Naive thymus-derived CD4-positive, alpha-beta T cell (primary cell): ENCODE measurements at regions of chr2 and their contacts with region 1.

Region 1: DNA sequence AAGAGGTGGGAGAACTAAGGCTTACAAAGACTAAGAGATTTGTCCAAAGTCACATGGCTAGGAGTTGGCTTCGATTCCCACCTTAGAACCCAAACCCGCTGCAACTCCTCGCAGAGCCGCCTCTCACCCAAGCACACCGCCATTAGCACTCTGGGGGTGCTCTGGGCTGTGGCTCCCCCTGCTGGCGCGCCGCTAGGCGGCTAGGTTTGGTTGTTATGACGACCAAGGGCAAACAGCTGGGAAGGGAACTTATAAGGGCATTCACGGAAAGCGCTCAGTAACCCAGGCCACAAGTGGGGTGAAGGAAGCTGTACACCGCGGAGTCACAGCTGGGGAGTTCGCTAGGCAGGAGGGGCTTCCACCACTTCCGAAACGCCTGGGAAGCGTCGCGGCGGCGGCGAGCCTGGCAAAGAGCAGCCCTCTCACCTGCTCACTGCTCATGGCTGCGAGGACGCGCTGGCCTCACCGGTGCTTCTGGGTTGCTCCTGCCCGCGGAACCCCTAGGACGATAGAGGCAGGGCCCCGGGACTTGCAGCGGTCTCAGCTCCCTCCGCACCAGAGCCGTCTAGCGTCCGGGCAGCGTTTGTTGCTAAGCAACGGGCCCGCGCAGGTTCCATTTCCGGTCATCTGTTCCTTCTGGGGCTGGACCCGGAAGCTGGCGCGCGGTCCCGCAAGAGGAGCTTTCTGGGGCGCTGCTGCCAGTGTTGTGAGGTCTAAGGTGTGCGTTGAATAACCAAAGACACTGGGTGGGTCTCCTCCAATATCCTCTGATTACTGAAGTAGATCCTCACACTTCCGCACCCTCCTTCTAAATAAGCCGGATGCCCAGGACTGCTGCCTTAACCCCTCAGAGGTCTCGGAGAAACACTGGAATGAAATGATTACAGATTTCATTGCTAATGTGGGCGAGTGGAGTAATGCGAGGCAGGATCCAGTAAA is at the start of gene DNAH7:
- DNase-seq: peak; percentile 84 to 94 (median 92)
- ATAC-seq: peak; percentile 96
- H3K4me3 ChIP-seq: peak within 1 kb of the TSS; percentile 69
- H3K4me3 Mint-ChIP-seq: peak within 1 kb of the TSS; percentile 77 to 92 (median 88)
- H3K27ac ChIP-seq: peak within 1 kb of the TSS; percentile 45
- H3K27ac Mint-ChIP-seq: peak within 1 kb of the TSS; percentile 75 to 94 (median 86)
- H3K4me1 ChIP-seq: peaks cover 6% of the 10 kb centered on the region in 2 donors
- H3K4me1 Mint-ChIP-seq: peaks cover 6 to 16% (median 12%) of the 10 kb centered on the region in 7 donors
- H3K27me3 ChIP-seq: peaks cover 0 to 3% of the 10 kb centered on the region in 2 donors
- H3K27me3 Mint-ChIP-seq: peaks cover 0 to 33% (median 3%) of the 10 kb centered on the region in 5 donors
- total RNA-seq, gene DNAH7: not detected

Region 2: GRCh38 chr2:194166818-194167217 is 1901.7 kb before region 1 on chr2:
- CTCF ChIA-PET with region 1: no interaction called
- POLR2A ChIA-PET with region 1: no interaction called
- intact Hi-C with region 1: loop called (anchors 1 to 2 kb)
- DNase-seq: peak in 2 of 9 donors; percentile 6 to 16
- ATAC-seq: no peak
- H3K4me3 ChIP-seq: no peak overlapping the region
- H3K4me3 Mint-ChIP-seq: no peak overlapping the region
- H3K27ac ChIP-seq: no peak overlapping the region
- H3K27ac Mint-ChIP-seq: no peak overlapping the region
- H3K4me1 ChIP-seq: no peaks in the 10 kb centered on the region
- H3K4me1 Mint-ChIP-seq: no peaks in the 10 kb centered on the region
- H3K27me3 ChIP-seq: no peaks in the 10 kb centered on the region
- H3K27me3 Mint-ChIP-seq: peaks cover 0 to 5% (median 0%) of the 10 kb centered on the region in 5 donors

Region 3: DNA sequence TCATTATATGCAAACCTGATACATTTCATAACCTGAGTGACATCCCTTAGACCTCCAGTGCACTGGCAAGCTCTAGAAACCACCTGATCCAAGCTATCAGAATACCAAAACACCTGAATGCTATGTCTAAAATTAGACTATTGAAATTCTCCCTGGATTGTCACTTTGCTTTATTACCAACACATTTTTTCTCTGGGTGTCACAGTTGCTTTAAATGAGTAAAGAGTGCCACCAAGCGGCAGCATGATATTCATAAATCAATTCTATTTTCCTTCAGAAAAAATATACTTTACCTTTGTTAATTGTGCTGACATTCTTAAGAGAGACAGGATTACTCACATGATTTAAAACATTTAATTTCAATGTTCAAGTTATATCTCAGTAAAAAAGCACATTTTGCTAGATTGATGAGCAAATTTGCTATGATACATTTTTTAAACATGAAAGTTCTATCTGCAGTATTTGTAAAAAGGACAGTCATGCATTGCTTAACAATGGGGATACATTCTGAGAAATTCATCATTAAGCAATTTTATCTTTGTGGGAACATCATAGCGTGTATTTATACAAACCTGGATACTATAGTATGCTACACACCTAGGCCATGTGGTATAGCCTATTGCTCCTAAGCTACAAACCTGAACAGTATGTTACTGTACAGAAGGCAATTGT is 750.0 kb before region 1 on chr2:
- CTCF ChIA-PET with region 1: no interaction called
- POLR2A ChIA-PET with region 1: no interaction called
- intact Hi-C with region 1: loop called (anchors 1 to 2 kb)
- DNase-seq: peak in 7 of 9 donors; percentile 11 to 57 (median 53)
- ATAC-seq: peak; percentile 57
- H3K4me3 ChIP-seq: no peak overlapping the region
- H3K4me3 Mint-ChIP-seq: no peak overlapping the region
- H3K27ac ChIP-seq: no peak overlapping the region
- H3K27ac Mint-ChIP-seq: no peak overlapping the region
- H3K4me1 ChIP-seq: no peaks in the 10 kb centered on the region
- H3K4me1 Mint-ChIP-seq: peaks cover 0 to 35% (median 18%) of the 10 kb centered on the region in 7 donors
- H3K27me3 ChIP-seq: no peaks in the 10 kb centered on the region
- H3K27me3 Mint-ChIP-seq: no peaks in the 10 kb centered on the region

Region 4: DNA sequence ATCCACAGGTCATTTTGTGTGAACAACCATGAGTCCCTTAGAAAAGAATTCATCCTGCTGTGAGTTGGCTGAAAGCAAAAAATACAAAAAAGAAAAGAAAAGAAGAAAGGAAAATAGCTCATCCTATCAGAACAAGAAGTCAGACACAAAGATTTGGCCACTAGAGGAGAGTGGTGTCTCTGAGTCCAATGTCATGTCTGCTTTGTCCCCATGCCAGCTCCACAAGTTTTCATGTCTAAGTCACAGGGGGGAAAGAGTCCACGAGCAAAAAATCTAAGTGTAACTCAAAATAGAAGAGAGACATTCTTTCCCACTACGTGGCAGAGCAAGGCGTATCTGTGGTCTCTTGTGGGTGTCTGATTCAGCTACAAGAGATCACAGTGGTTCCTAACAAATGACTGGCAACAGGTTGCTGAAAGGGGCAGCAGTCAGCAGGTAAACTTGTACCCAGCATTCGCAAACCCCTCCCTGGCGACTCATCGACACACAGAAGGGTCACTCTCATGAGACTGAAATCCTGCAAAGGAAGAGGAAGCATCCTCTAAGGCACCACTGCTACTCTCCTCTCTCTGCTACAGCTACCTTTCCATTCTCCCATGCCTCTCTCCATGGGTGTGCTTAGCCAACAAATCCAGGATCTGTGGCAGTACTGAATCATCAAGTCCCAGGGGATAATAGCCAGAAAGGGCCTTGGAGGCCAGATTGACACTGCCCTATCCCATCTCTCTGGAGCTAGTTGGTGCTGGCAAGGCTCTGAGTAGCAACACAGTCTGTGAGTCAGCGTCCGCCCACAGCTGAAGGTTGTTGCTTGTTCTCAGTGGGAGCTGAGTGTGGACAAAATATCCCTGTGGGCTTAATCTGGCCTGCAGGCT is 534.5 kb before region 1 on chr2:
- CTCF ChIA-PET with region 1: no interaction called
- POLR2A ChIA-PET with region 1: no interaction called
- intact Hi-C with region 1: loop called in 1 of 2 experiments (anchors 2 kb)
- DNase-seq: peak in 8 of 9 donors; percentile 28 to 63 (median 42)
- ATAC-seq: peak; percentile 48
- H3K4me3 ChIP-seq: peak overlapping the region; percentile 51
- H3K4me3 Mint-ChIP-seq: peak overlapping the region; percentile 77 to 95 (median 90)
- H3K27ac ChIP-seq: peak overlapping the region; percentile 77
- H3K27ac Mint-ChIP-seq: peak overlapping the region; percentile 92 to 100 (median 98)
- H3K4me1 ChIP-seq: peaks cover 70 to 73% of the 10 kb centered on the region in 2 donors
- H3K4me1 Mint-ChIP-seq: peaks cover 69 to 90% (median 86%) of the 10 kb centered on the region in 7 donors
- H3K27me3 ChIP-seq: no peaks in the 10 kb centered on the region
- H3K27me3 Mint-ChIP-seq: no peaks in the 10 kb centered on the region

Region 5: GRCh38 chr2:195664528-195664927 is 404.0 kb before region 1 on chr2:
- CTCF ChIA-PET with region 1: interaction called, 7 read pairs
- POLR2A ChIA-PET with region 1: interaction called, 3 read pairs
- intact Hi-C with region 1: loop called in 1 of 2 experiments (anchors 1 kb)
- DNase-seq: peak in 2 of 9 donors; percentile 13 to 20
- ATAC-seq: no peak
- H3K4me3 ChIP-seq: no peak overlapping the region
- H3K4me3 Mint-ChIP-seq: peak overlapping the region in 4 of 10 donors; percentile 45 to 54 (median 49)
- H3K27ac ChIP-seq: peak overlapping the region; percentile 42
- H3K27ac Mint-ChIP-seq: peak overlapping the region in 8 of 9 donors; percentile 71 to 93 (median 85)
- H3K4me1 ChIP-seq: peaks cover 20 to 46% of the 10 kb centered on the region in 2 donors
- H3K4me1 Mint-ChIP-seq: peaks cover 30 to 95% (median 78%) of the 10 kb centered on the region in 7 donors
- H3K27me3 ChIP-seq: no peaks in the 10 kb centered on the region
- H3K27me3 Mint-ChIP-seq: no peaks in the 10 kb centered on the region

Region 6: DNA sequence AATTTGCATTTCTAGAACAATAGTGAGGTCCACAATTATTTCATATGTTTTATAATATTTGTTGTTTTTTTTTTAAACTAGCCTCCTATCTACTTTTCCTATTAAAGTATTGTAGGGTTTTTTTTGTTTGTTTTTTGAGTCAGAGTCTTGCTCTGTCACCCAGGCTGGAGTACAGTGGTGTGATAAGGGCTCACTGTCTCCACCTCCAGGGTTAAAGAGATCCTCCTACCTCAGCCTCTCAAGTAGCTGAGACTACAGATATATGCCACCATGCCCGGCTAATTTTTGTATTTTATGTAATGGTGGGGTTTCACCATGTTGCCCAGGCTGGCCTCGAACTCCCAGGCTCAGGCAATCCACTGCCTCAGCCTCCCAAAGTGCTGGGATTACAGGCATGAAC is 289.0 kb before region 1 on chr2:
- CTCF ChIA-PET with region 1: no interaction called
- POLR2A ChIA-PET with region 1: no interaction called
- intact Hi-C with region 1: no loop called
- DNase-seq: no peak
- ATAC-seq: no peak
- H3K4me3 ChIP-seq: no peak overlapping the region
- H3K4me3 Mint-ChIP-seq: no peak overlapping the region
- H3K27ac ChIP-seq: no peak overlapping the region
- H3K27ac Mint-ChIP-seq: no peak overlapping the region
- H3K4me1 ChIP-seq: no peaks in the 10 kb centered on the region
- H3K4me1 Mint-ChIP-seq: no peaks in the 10 kb centered on the region
- H3K27me3 ChIP-seq: no peaks in the 10 kb centered on the region
- H3K27me3 Mint-ChIP-seq: no peaks in the 10 kb centered on the region

Region 7: DNA sequence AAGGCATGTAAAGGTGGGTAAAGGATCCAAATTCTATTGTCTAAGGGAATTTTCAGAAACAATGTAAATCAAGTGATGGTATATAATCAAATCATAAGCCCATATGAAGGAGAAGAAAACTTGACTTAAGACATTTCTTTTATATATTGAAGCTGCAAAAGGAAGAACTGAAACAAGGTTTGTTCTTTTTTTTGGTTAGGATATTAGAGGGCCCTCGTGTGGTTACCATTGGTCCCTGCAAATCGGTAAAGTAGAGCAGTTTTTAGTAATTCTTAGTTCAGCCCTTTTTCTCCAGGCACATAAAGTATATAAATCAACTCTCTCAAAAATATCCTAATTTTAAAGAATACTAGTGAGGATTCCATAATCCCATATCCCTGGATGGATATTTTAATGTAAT is 208.5 kb after region 1 on chr2:
- CTCF ChIA-PET with region 1: interaction called, 10 read pairs
- POLR2A ChIA-PET with region 1: no interaction called
- intact Hi-C with region 1: no loop called
- DNase-seq: peak in 7 of 9 donors; percentile 45 to 74 (median 63)
- ATAC-seq: peak; percentile 79
- H3K4me3 ChIP-seq: no peak overlapping the region
- H3K4me3 Mint-ChIP-seq: peak overlapping the region in 6 of 10 donors; percentile 30 to 83 (median 65)
- H3K27ac ChIP-seq: peak overlapping the region; percentile 63
- H3K27ac Mint-ChIP-seq: peak overlapping the region; percentile 50 to 99 (median 89)
- H3K4me1 ChIP-seq: peaks cover 21 to 42% of the 10 kb centered on the region in 2 donors
- H3K4me1 Mint-ChIP-seq: peaks cover 29 to 60% (median 47%) of the 10 kb centered on the region in 7 donors
- H3K27me3 ChIP-seq: no peaks in the 10 kb centered on the region
- H3K27me3 Mint-ChIP-seq: no peaks in the 10 kb centered on the region

Region 8: DNA sequence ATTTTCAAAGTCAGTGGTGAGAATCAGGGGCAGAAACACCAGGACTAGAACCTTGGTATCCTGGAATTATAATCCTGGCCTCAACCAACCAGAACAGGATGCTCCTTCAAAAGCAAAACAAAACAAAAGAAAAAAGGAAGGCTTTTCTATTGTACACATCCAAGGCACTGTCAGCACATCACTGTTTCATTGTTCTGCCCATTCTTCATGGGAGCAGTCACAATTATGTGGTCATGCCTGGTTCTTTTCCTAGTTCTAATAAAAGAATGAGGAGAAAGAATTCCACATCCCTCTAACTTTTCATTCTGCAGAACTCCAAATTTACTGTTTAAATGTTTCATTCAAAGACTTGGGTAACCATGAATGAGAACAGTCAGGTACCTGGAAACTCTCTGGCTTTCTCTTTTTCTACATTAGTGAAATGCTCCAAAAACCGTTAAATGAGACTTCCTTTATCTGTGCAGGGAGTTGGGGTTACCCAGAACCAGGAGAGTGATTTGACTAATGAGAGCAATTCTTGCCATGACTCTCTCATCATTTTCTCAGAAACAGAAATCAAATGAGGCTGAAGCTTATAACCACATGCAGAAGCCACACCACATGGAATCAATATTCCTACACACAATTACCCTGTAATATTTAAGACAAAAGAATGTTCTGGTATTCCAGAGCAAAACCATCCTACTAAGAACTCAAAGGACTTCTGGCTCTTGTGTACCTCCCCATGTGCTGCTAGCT is 460.1 kb after region 1 on chr2:
- CTCF ChIA-PET with region 1: no interaction called
- POLR2A ChIA-PET with region 1: no interaction called
- intact Hi-C with region 1: no loop called
- DNase-seq: no peak
- ATAC-seq: no peak
- H3K4me3 ChIP-seq: no peak overlapping the region
- H3K4me3 Mint-ChIP-seq: peak overlapping the region in 1 of 10 donors; percentile 26
- H3K27ac ChIP-seq: no peak overlapping the region
- H3K27ac Mint-ChIP-seq: no peak overlapping the region
- H3K4me1 ChIP-seq: no peaks in the 10 kb centered on the region
- H3K4me1 Mint-ChIP-seq: peaks cover 0 to 21% (median 0%) of the 10 kb centered on the region in 7 donors
- H3K27me3 ChIP-seq: no peaks in the 10 kb centered on the region
- H3K27me3 Mint-ChIP-seq: peaks cover 0 to 19% (median 16%) of the 10 kb centered on the region in 5 donors

Region 9: GRCh38 chr2:196639180-196640030 is 570.9 kb after region 1 on chr2 and contains the start of gene CCDC150:
- CTCF ChIA-PET with region 1: interaction called, 3 read pairs
- POLR2A ChIA-PET with region 1: no interaction called
- intact Hi-C with region 1: loop called (anchors 1 kb)
- DNase-seq: peak; percentile 88 to 95 (median 94)
- ATAC-seq: peak; percentile 100
- H3K4me3 ChIP-seq: peak within 1 kb of the TSS; percentile 86
- H3K4me3 Mint-ChIP-seq: peak within 1 kb of the TSS; percentile 82 to 92 (median 88)
- H3K27ac ChIP-seq: peak within 1 kb of the TSS; percentile 48
- H3K27ac Mint-ChIP-seq: peak within 1 kb of the TSS in 8 of 9 donors; percentile 30 to 78 (median 43)
- H3K4me1 ChIP-seq: peaks cover 7 to 8% of the 10 kb centered on the region in 2 donors
- H3K4me1 Mint-ChIP-seq: peaks cover 4 to 26% (median 19%) of the 10 kb centered on the region in 7 donors
- H3K27me3 ChIP-seq: no peaks in the 10 kb centered on the region
- H3K27me3 Mint-ChIP-seq: peaks cover 0 to 15% (median 0%) of the 10 kb centered on the region in 5 donors
- total RNA-seq, gene CCDC150: 0.13 to 11.2 (median 1.2) TPM